Cardiac septum (tissue), 1 donor: ENCODE measurements at regions of chrX and their contacts with region 1.

Region 1: GRCh38 chrX:41110801-41111625 is 25.8 kb downstream of the USP9X start:
- DNase-seq: no peak

Region 2: GRCh38 chrX:40580537-40581335 is 530.3 kb before region 1 on chrX and contains the start of gene ATP6AP2:
- intact Hi-C with region 1: no loop called
- DNase-seq: peak; percentile 96
- total RNA-seq, gene ATP6AP2: 43.7 TPM

Region 3: GRCh38 chrX:40832723-40833122 is 278.3 kb before region 1 on chrX:
- intact Hi-C with region 1: no loop called
- DNase-seq: no peak

Region 4: GRCh38 chrX:40877887-40878286 is 233.1 kb before region 1 on chrX:
- intact Hi-C with region 1: loop called (anchors 5 kb)
- DNase-seq: no peak